ENCODE measurements at regions of chr17 and their contacts with region 1.

Region 1: DNA sequence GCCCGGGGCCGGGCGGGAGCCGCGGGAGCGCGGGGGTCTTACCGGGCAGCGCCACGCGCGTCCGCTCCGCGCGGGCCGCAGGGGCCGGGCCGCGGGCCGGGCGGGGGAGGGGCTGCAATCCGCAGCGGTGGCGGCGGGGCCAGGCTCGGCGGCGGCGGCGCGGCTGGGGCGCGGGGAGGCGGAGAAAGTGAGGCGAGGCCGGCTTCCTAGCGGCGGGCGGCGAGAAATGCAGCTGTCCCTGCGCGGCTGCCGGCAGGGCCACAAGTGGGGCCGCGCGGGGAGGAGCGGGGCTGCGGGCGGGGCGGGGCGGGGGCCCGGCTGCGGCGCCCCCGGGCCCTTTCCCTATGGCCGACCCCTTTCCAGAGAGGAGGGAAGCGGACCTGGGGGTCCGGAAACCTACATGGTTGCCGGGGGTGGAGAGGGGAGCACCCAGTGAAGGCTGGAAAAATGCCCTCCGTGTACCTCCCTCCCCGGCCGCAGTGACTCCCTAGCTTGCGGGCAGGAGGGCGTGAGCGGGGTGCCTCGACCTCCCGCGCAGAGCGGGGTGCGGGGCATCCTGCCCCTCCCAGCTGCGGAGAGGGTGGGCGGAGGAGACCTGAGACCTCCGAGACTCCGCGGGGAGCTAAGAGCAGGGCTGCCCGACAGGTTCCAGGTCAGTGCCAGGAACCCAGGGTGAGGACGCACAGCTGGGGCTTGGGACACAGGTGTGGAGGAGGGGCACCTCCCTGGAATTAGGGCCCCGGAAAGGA is at the start of gene CUEDC1:
- DNase-seq: peak; percentile 77 to 84
- H3K4me3 ChIP-seq: peak within 1 kb of the TSS; percentile 55 to 96
- H3K27ac ChIP-seq: peak within 1 kb of the TSS; percentile 98 to 99
- H3K4me1 ChIP-seq: peaks cover 0 to 8% of the 10 kb centered on the region in 2 donors
- H3K27me3 ChIP-seq: no peaks in the 10 kb centered on the region
- CTCF ChIP-seq: peak in 3 of 4 experiments; percentile 44 to 72 (median 62)
- POLR2A ChIP-seq: no peak
- total RNA-seq, gene CUEDC1: 7.9 to 63.6 (median 18.8) TPM

Region 2: GRCh38 chr17:57895382-57896060 is 59.8 kb before region 1 on chr17:
- intact Hi-C with region 1: loop called (anchors 2 kb)
- DNase-seq: peak; percentile 71 to 79
- H3K4me3 ChIP-seq: no peak overlapping the region
- H3K27ac ChIP-seq: peak overlapping the region; percentile 70 to 89
- H3K4me1 ChIP-seq: peaks cover 4 to 70% of the 10 kb centered on the region in 2 donors
- H3K27me3 ChIP-seq: no peaks in the 10 kb centered on the region
- CTCF ChIP-seq: no peak
- POLR2A ChIP-seq: no peak

Region 3: GRCh38 chr17:57987580-57988421 is 32.4 kb after region 1 on chr17 and contains the start of gene VEZF1:
- intact Hi-C with region 1: loop called (anchors 2 kb)
- DNase-seq: peak; percentile 78 to 80
- H3K4me3 ChIP-seq: peak within 1 kb of the TSS; percentile 78 to 89
- H3K27ac ChIP-seq: peak within 1 kb of the TSS; percentile 96 to 98
- H3K4me1 ChIP-seq: peaks cover 8 to 13% of the 10 kb centered on the region in 2 donors
- H3K27me3 ChIP-seq: no peaks in the 10 kb centered on the region
- CTCF ChIP-seq: no peak
- POLR2A ChIP-seq: peak; percentile 21 to 55
- total RNA-seq, gene VEZF1: 58.8 to 133 (median 110) TPM

Measured in uterus (tissue), 4 donors.